ENCODE measurements at regions of chr2 and their contacts with region 1.

Region 1: GRCh38 chr2:47767880-47768609 is 14.9 kb upstream of the MSH6 start:
- DNase-seq: peak; percentile 64 to 89 (median 79)
- H3K4me3 ChIP-seq: no peak overlapping the region
- H3K27ac ChIP-seq: no peak overlapping the region
- H3K4me1 ChIP-seq: peaks cover 0 to 2% (median 0%) of the 10 kb centered on the region in 3 donors
- H3K27me3 ChIP-seq: no peaks in the 10 kb centered on the region
- CTCF ChIP-seq: peak; percentile 98

Region 2: DNA sequence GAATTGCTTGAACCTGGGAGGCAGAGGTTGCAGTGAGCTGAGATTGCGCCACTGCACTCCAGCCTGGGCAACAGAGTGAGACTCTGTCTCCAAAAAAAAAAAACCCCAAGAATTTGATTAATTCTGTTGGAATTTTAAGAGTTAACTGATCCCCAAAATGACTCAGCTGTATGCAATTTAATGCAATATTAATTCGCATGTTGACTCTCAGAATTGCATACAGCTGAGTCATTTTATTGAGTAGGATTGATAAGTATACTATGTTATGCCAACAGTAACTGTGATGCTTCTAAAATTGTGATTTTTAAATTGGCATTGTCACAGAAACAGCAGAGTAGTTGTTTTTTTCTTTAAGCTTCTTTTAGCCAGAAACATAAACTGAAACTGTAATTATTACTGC is 345.5 kb before region 1 on chr2:
- intact Hi-C with region 1: loop called (anchors 10 kb)
- DNase-seq: no peak
- H3K4me3 ChIP-seq: no peak overlapping the region
- H3K27ac ChIP-seq: no peak overlapping the region
- H3K4me1 ChIP-seq: no peaks in the 10 kb centered on the region
- H3K27me3 ChIP-seq: no peaks in the 10 kb centered on the region
- CTCF ChIP-seq: no peak

Region 3: GRCh38 chr2:47437287-47437686 is 330.8 kb before region 1 on chr2:
- intact Hi-C with region 1: loop called (anchors 10 kb)
- DNase-seq: peak in 2 of 5 donors; percentile 56 to 70
- H3K4me3 ChIP-seq: no peak overlapping the region
- H3K27ac ChIP-seq: no peak overlapping the region
- H3K4me1 ChIP-seq: no peaks in the 10 kb centered on the region
- H3K27me3 ChIP-seq: no peaks in the 10 kb centered on the region
- CTCF ChIP-seq: peak; percentile 32

Region 4: GRCh38 chr2:48059977-48060376 is 291.9 kb after region 1 on chr2:
- intact Hi-C with region 1: no loop called
- DNase-seq: no peak
- H3K4me3 ChIP-seq: no peak overlapping the region
- H3K27ac ChIP-seq: no peak overlapping the region
- H3K4me1 ChIP-seq: no peaks in the 10 kb centered on the region
- H3K27me3 ChIP-seq: no peaks in the 10 kb centered on the region
- CTCF ChIP-seq: no peak